IMR-90 (cell line): ENCODE measurements at regions of chr4 and their contacts with region 1.

Region 1: GRCh38 chr4:98467627-98468072 is 190.8 kb downstream of the TSPAN5 start:
- DNase-seq: peak; percentile 95
- ATAC-seq: peak; percentile 88
- H3K4me3 ChIP-seq: peak overlapping the region; percentile 37; the same call in 1 of the 2 replicates
- H3K27ac ChIP-seq: 0 out of 2 replicates have a peak overlapping the region, but pooled peaks have one; percentile 4
- H3K4me1 ChIP-seq: peaks cover 5% of the 10 kb centered on the region
- H3K27me3 ChIP-seq: no peaks in the 10 kb centered on the region
- CTCF ChIP-seq: peak; percentile 82
- POLR2A ChIP-seq: peak; percentile 60; the same call in 1 of the 2 replicates
- RAD21 ChIP-seq: peak; percentile 90

Region 2: DNA sequence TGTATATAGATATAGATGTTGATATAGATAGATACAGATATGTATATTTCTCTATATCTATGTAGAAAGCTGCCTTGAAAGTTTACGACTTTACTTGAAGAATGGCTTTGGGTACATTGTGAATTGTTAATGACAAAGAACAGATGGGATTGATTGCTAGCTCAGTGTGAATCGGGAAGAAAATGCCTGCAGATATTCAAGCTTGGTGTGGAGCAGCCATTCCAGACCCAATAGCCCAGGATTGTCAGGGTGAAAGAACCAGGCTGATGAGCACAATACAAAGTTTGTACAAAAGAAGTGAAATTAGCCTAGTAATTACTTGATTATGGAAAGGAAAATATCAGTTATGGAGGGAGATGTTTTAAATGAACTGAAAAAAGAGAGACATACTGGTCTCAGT is 1270.5 kb before region 1 on chr4:
- CTCF ChIA-PET with region 1: no interaction called
- POLR2A ChIA-PET with region 1: no interaction called
- dilution Hi-C with region 1: no loop called
- in situ Hi-C with region 1: no loop called
- intact Hi-C with region 1: no loop called
- DNase-seq: no peak
- ATAC-seq: no peak
- H3K4me3 ChIP-seq: no peak overlapping the region
- H3K27ac ChIP-seq: no peak overlapping the region
- H3K4me1 ChIP-seq: no peaks in the 10 kb centered on the region
- H3K27me3 ChIP-seq: no peaks in the 10 kb centered on the region
- CTCF ChIP-seq: no peak
- POLR2A ChIP-seq: no peak
- RAD21 ChIP-seq: no peak

Region 3: DNA sequence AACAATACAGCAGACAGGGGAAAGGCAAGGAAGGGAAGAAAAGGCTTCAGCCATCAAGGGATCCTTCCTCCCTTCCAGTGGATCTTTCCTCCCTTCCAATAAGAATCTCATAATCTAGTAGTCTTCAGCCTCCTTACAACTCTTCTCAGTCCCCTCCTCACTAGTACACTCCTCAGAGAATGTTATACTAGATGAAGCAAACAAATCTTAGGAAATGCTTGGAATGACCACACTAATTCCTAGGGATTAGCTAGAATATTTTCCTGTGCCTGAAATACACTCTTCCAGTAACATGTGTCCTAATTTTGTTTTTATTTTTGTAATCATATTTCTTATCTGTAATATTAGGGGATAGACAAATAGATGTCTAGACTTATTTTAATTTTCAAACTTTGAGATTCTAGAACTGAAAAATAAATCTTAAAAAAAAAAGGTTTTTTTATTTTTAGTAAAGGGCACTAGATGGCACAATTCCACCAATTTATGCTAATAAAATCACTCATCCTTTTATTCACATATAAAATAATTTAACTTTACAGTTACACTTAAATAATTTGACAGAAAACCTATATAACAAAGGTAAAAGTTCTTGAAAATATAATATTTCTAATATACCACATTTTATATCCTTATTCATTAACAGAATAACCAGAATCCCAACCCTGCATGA is 317.4 kb before region 1 on chr4:
- CTCF ChIA-PET with region 1: interaction called, 5 read pairs
- POLR2A ChIA-PET with region 1: no interaction called
- dilution Hi-C with region 1: no loop called
- in situ Hi-C with region 1: no loop called
- intact Hi-C with region 1: loop called (anchors 5 kb)
- DNase-seq: peak; percentile 16
- ATAC-seq: peak; percentile 59
- H3K4me3 ChIP-seq: no peak overlapping the region
- H3K27ac ChIP-seq: peak overlapping the region; percentile 29; the same call in 1 of the 2 replicates
- H3K4me1 ChIP-seq: peaks cover 2% of the 10 kb centered on the region; the same call in 1 of the 2 replicates
- H3K27me3 ChIP-seq: no peaks in the 10 kb centered on the region
- CTCF ChIP-seq: peak; percentile 45
- POLR2A ChIP-seq: no peak
- RAD21 ChIP-seq: peak; percentile 50

Region 4: DNA sequence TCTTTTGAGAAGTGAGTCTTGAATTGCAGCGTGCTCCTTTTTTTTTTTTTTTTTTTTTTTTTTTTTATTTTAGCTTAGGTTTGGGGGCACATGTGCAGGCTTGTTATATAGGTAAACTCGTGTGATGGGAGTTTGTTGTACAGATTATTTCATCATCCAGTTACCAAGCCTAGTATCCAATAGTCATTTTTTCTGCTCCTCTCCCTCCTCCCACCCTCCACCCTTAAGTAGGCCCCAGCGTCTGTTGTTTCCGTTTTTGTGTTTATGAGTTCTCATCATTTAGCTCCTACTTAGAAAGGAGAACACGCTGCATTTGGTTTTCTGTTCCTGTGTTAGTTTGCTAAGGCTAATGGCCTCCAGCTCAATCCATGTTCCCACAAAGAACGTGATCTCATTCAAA is 272.1 kb after region 1 on chr4:
- CTCF ChIA-PET with region 1: no interaction called
- POLR2A ChIA-PET with region 1: no interaction called
- dilution Hi-C with region 1: no loop called
- in situ Hi-C with region 1: no loop called
- intact Hi-C with region 1: loop called (anchors 5 kb)
- DNase-seq: no peak
- ATAC-seq: no peak
- H3K4me3 ChIP-seq: no peak overlapping the region
- H3K27ac ChIP-seq: no peak overlapping the region
- H3K4me1 ChIP-seq: no peaks in the 10 kb centered on the region
- H3K27me3 ChIP-seq: no peaks in the 10 kb centered on the region; the same call in 1 of the 2 replicates
- CTCF ChIP-seq: no peak
- POLR2A ChIP-seq: no peak
- RAD21 ChIP-seq: no peak

Region 5: DNA sequence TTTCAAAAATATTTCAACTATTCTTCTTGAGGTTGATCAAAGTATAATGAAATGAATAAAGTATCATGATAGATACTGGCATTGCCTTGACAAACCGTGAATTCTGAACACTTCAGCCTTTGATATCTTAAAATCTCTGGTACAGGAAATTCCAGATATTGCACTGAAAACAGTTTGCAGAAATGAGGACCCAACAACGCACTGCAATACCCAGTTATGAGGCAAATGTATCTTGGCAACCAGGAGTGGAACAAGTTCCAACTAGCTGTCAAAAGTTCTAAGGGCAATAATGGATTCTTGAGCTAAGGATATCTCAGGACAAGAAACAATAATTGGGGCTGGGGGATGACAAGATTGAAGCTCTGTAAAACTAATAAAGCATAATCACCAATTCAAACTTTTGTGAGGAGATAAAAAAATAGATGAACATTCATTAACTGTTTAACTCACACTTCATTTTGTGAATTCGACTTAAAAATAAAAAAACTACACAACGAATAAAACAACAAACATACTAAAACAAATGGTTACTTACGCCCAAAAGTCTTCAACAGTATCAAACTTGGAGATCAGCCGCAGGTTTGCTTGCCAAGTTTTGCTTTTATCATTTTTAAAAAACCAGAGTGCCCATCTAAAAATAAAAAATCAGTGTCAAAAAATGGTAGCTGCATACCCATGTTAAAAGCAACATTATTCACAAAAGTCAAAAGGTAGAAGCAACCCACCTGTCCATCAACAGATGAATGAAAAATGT is 423.2 kb after region 1 on chr4:
- CTCF ChIA-PET with region 1: no interaction called
- POLR2A ChIA-PET with region 1: no interaction called
- dilution Hi-C with region 1: no loop called
- in situ Hi-C with region 1: loop called (anchors 25 kb)
- intact Hi-C with region 1: no loop called
- DNase-seq: no peak
- ATAC-seq: no peak
- H3K4me3 ChIP-seq: no peak overlapping the region
- H3K27ac ChIP-seq: no peak overlapping the region
- H3K4me1 ChIP-seq: no peaks in the 10 kb centered on the region
- H3K27me3 ChIP-seq: no peaks in the 10 kb centered on the region
- CTCF ChIP-seq: no peak
- POLR2A ChIP-seq: no peak
- RAD21 ChIP-seq: no peak

Region 6: DNA sequence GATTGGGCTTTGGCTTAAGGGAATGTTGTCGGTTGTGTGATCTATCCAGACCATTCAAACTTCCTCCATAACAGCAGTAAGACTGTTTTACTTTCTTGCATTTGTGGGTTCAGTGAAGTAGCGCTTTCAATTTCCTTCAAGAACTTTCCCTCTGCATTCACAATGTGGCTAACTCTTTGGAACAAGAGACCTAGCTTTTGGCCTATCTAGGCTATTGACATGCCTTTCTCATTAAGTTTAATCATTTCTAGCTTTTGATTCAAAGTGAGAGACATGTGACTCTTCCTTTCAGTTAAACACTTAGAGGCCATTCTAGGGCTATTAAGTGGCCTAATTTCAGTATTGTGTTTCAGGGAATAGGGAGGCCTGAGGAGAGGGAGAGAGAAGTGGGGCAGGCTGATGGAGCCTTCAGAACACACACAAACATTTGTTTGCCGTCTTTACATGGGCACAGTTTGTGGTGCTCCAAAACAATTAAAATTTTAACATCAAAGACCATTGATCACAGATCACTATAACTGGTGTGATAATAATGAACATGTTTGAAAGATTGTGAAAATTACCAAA is 586.9 kb after region 1 on chr4:
- CTCF ChIA-PET with region 1: no interaction called
- POLR2A ChIA-PET with region 1: no interaction called
- dilution Hi-C with region 1: no loop called
- in situ Hi-C with region 1: loop called (anchors 25 kb)
- intact Hi-C with region 1: no loop called
- DNase-seq: no peak
- ATAC-seq: no peak
- H3K4me3 ChIP-seq: no peak overlapping the region
- H3K27ac ChIP-seq: no peak overlapping the region
- H3K4me1 ChIP-seq: peaks cover 5% of the 10 kb centered on the region
- H3K27me3 ChIP-seq: no peaks in the 10 kb centered on the region
- CTCF ChIP-seq: no peak
- POLR2A ChIP-seq: no peak
- RAD21 ChIP-seq: no peak

Region 7: DNA sequence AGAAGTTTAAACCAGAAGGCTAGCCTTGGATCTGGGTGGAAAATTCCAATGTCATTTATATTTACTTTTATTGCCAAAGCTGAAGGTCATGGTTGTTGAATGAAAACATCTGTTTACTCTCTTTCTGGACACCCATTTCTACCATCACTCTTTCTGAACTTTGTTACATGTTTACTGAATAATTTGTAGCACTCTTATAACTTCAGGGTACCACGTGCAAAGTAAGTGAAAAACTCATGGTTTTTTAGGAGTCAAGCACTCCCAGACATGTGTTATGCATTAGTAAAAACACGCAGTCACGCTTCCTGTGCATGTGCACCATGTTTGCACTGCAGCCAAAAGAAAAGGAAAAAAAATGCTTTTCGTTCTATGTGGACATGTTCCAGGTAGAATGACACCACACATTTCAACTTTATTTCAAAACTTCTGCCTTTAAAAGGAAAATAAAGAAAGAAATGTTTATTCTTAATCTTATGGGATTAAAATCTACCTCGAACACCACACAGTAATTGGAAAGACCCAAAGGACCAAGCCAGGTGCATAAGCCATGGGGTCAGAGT is 916.3 kb after region 1 on chr4:
- CTCF ChIA-PET with region 1: no interaction called
- POLR2A ChIA-PET with region 1: no interaction called
- dilution Hi-C with region 1: no loop called
- in situ Hi-C with region 1: no loop called
- intact Hi-C with region 1: no loop called
- DNase-seq: peak; percentile 97
- ATAC-seq: peak; percentile 60
- H3K4me3 ChIP-seq: no peak overlapping the region
- H3K27ac ChIP-seq: peak overlapping the region; percentile 95; the same call in 1 of the 2 replicates
- H3K4me1 ChIP-seq: peaks cover 13% of the 10 kb centered on the region
- H3K27me3 ChIP-seq: no peaks in the 10 kb centered on the region
- CTCF ChIP-seq: no peak
- POLR2A ChIP-seq: no peak
- RAD21 ChIP-seq: no peak

Region 8: DNA sequence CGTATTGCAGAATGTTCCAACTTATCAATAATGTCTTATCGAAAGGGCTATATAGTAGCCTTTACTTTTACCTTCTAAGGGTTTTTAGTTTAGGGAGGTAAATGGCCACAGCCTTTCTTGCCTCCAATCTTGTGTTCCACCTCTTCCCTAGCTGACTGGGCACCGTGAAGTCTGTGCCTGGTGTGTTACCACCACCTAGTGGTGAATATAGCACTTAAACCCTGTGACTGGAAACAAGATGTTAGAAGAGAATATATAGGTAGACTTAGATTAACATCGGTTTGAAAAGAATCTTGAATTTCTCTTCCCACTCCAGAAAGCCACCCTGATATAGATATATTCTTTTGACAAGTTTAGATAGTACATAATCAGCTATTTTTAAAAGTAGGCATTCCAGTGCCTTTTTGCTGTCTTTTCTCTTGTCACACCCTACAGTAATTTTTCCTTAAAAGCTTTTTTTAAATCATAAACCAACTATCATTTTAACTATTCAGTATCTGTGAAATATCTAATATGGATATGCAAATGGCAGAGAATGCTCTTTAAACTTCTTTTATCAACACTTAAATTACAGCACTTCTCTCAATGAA is 995.3 kb after region 1 on chr4:
- CTCF ChIA-PET with region 1: no interaction called
- POLR2A ChIA-PET with region 1: no interaction called
- dilution Hi-C with region 1: no loop called
- in situ Hi-C with region 1: no loop called
- intact Hi-C with region 1: loop called (anchors 10 kb)
- DNase-seq: peak; percentile 72
- ATAC-seq: peak; percentile 98
- H3K4me3 ChIP-seq: no peak overlapping the region
- H3K27ac ChIP-seq: no peak overlapping the region
- H3K4me1 ChIP-seq: no peaks in the 10 kb centered on the region
- H3K27me3 ChIP-seq: 0 out of 2 replicates have a peak, but pooled peaks cover 1% of the 10 kb centered on the region
- CTCF ChIP-seq: peak; percentile 92
- POLR2A ChIP-seq: no peak
- RAD21 ChIP-seq: peak; percentile 98